ENCODE measurements at regions of chr18 and their contacts with region 1.

Region 1: GRCh38 chr18:67104700-67105284 is 411.7 kb downstream of the DSEL start:
- DNase-seq: peak; percentile 65 to 80
- H3K4me3 ChIP-seq: no peak overlapping the region
- H3K4me1 ChIP-seq: no peaks in the 10 kb centered on the region
- H3K27me3 ChIP-seq: no peaks in the 10 kb centered on the region

Region 2: DNA sequence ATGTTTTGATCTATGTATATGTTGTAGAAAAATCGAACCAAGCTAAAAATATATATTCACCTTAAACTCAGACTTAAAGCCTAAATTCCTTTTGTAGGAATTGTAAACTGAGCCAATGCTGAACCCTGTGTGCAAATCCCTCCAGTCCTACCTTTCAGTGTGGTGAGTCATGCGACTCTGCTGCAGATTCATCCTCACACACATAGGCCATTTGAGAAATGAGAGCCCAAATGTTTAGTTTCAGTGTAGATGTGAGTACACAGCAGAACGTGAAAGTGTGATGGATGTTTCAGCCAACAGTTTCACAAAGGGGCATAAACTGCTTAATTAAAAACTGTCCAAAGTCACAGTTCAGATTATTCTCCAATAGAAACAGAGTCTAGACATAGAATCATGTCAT is 694.1 kb before region 1 on chr18:
- in situ Hi-C with region 1: no loop called
- DNase-seq: no peak
- H3K4me3 ChIP-seq: no peak overlapping the region
- H3K4me1 ChIP-seq: no peaks in the 10 kb centered on the region; the same call in 1 of the 2 replicates
- H3K27me3 ChIP-seq: no peaks in the 10 kb centered on the region

Region 3: GRCh38 chr18:67199993-67200617 is 95.3 kb after region 1 on chr18:
- in situ Hi-C with region 1: loop called (anchors 10 kb)
- DNase-seq: peak in 1 of 2 experiments; percentile 66
- H3K4me3 ChIP-seq: no peak overlapping the region
- H3K4me1 ChIP-seq: no peaks in the 10 kb centered on the region
- H3K27me3 ChIP-seq: no peaks in the 10 kb centered on the region